Natural killer cell (primary cell): ENCODE measurements at regions of chr2 and their contacts with region 1.

Region 1: GRCh38 chr2:105072039-105072438 is 34.2 kb downstream of the MRPS9 start:
- DNase-seq: peak in 1 of 2 donors; percentile 54
- ATAC-seq: peak; percentile 75 to 84 (median 81)
- H3K4me3 ChIP-seq: no peak overlapping the region
- H3K4me3 Mint-ChIP-seq: peak overlapping the region; percentile 77
- H3K27ac ChIP-seq: peak overlapping the region; percentile 77
- H3K27ac Mint-ChIP-seq: peak overlapping the region; percentile 77 to 85
- H3K4me1 ChIP-seq: peaks cover 25% of the 10 kb centered on the region
- H3K4me1 Mint-ChIP-seq: peaks cover 61 to 62% of the 10 kb centered on the region in 2 donors
- H3K27me3 ChIP-seq: no peaks in the 10 kb centered on the region
- H3K27me3 Mint-ChIP-seq: no peaks in the 10 kb centered on the region
- CTCF ChIP-seq: no peak

Region 2: DNA sequence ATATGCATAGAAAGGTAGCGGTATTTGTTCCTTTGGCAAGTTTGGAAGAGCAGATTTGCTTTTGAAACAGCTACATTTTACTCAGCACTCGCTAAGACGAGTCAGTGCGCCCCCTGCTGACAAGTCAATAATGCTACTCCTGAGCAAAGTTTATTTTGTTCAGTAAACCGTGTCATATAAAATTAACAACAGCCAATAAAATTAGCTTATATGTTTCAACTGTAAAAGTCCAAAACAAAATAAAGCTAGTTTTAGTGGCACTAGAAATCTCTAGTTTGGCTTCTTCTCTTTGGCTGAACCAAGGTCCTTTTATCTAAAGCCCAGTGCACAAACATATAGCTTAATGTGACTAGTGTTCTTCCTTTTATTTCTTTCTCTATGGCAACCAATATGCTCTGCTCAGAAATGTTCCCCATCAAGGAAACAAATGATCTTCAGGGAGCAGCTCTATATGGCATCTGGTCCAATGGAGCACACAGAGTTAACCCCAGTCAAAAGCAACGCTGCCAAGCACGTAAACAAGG is 222.4 kb before region 1 on chr2:
- intact Hi-C with region 1: loop called (anchors 10 kb)
- DNase-seq: peak; percentile 40 to 69
- ATAC-seq: peak in 2 of 3 donors; percentile 46 to 56
- H3K4me3 ChIP-seq: no peak overlapping the region
- H3K4me3 Mint-ChIP-seq: no peak overlapping the region
- H3K27ac ChIP-seq: no peak overlapping the region
- H3K27ac Mint-ChIP-seq: no peak overlapping the region
- H3K4me1 ChIP-seq: peaks cover 27% of the 10 kb centered on the region
- H3K4me1 Mint-ChIP-seq: peaks cover 43 to 46% of the 10 kb centered on the region in 2 donors
- H3K27me3 ChIP-seq: peaks cover 69% of the 10 kb centered on the region
- H3K27me3 Mint-ChIP-seq: peaks cover 84 to 88% of the 10 kb centered on the region in 2 donors
- CTCF ChIP-seq: peak; percentile 70

Region 3: GRCh38 chr2:105037572-105038382 is 34.3 kb before region 1 on chr2 and contains the start of gene MRPS9:
- intact Hi-C with region 1: loop called (anchors 1 kb)
- DNase-seq: peak; percentile 97 to 99
- ATAC-seq: peak; percentile 97 to 100 (median 98)
- H3K4me3 ChIP-seq: peak within 1 kb of the TSS; percentile 90
- H3K4me3 Mint-ChIP-seq: peak within 1 kb of the TSS; percentile 99
- H3K27ac ChIP-seq: peak within 1 kb of the TSS; percentile 94
- H3K27ac Mint-ChIP-seq: peak within 1 kb of the TSS; percentile 92 to 97
- H3K4me1 ChIP-seq: peaks cover 15% of the 10 kb centered on the region
- H3K4me1 Mint-ChIP-seq: peaks cover 38 to 43% of the 10 kb centered on the region in 2 donors
- H3K27me3 ChIP-seq: no peaks in the 10 kb centered on the region
- H3K27me3 Mint-ChIP-seq: no peaks in the 10 kb centered on the region
- CTCF ChIP-seq: no peak
- total RNA-seq, gene MRPS9: 17.5 to 25.0 (median 19.2) TPM

Region 4: DNA sequence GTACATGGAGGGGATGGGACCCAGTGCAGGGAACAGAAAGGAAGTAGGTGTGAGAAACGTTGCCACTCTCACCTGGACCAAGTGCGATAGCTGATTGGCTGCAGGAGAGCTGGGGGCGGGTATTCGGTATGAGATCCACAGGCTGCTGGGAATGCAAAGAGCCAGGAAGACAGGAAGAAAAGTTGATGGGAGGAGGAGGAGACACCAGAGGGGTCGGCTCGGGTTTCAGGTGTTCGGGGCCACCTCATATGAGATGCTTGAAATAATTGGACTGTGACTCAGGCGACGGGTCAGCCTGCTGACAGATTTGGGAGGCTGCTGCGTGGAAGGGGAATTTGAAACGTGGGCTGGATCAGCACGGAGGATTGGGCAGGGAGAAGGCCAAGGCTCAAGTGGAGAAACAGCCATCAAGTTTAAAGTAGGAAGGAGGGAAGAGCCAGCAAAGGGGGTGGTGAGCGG is 31.0 kb after region 1 on chr2:
- intact Hi-C with region 1: no loop called
- DNase-seq: no peak
- ATAC-seq: no peak
- H3K4me3 ChIP-seq: no peak overlapping the region
- H3K4me3 Mint-ChIP-seq: no peak overlapping the region
- H3K27ac ChIP-seq: no peak overlapping the region
- H3K27ac Mint-ChIP-seq: peak overlapping the region in 1 of 2 donors; percentile 15
- H3K4me1 ChIP-seq: no peaks in the 10 kb centered on the region
- H3K4me1 Mint-ChIP-seq: peaks cover 15 to 20% of the 10 kb centered on the region in 2 donors
- H3K27me3 ChIP-seq: no peaks in the 10 kb centered on the region
- H3K27me3 Mint-ChIP-seq: no peaks in the 10 kb centered on the region
- CTCF ChIP-seq: no peak